Dendritic cell treated with granulocyte-macrophage colony-stimulating factor and Interleukin-4, amounts not matched to agents 40 ng/mL and 50 ng/mL, for 4 days (primary cell): ENCODE measurements at regions of chr15 and their contacts with region 1.

Region 1: DNA sequence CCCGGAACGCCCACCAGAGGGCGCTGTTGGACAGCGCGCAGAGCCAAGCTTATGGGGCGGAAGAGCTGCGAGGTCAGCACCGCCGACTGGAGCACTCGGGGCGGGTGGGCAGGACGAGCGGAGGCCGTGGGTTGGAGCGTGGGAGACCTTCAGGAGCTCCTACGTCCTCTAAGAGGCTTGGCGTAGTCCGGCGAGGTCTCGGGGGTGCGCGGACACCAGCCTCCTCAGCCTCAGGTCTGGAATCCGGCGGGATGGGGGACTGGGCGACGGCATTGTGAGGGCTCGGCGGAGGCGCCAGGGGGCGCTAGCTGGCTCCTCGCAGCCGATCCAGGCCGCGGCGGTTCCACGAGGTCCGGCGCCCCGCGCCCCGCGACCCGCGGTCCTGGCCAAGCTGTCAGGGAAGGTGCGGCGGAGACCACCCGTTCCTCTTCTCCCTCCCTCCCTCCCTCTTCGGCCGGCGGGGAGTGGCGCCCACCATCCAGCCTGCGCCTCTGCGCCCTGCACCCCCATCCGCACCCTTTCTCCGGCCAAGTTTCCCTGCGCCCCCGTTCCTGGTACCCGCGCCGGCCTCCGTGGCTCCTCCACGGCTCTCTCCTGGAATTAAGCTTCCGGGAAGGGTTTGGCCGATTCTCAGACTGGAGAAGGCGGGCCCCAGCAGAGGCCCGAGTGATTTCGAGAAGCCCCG is 24.3 kb upstream of the POLG start:
- H3K4me3 Mint-ChIP-seq: peak overlapping the region; percentile 83
- H3K27ac Mint-ChIP-seq: no peak overlapping the region
- H3K4me1 Mint-ChIP-seq: peaks cover 42% of the 10 kb centered on the region
- H3K27me3 Mint-ChIP-seq: peaks cover 89% of the 10 kb centered on the region

Region 2: DNA sequence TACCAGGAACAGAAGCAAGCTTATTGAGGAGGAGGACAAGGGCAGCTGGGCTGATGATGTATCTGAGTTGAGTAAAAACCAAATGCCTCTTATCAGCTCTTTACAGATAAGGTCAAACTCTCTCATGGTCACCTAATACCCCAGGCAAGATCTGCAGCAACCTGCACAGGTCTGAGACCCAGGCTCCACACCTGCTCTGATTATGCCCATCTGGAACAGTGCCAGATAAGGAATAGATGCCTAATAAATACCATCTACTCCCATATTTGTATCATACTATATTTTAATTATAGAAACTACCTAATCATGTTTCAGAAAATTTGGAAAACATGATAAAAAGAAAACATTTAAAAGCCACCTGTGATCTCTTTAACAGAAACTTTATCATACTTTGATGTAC is 758.4 kb before region 1 on chr15:
- intact Hi-C with region 1: no loop called
- H3K4me3 Mint-ChIP-seq: no peak overlapping the region
- H3K27ac Mint-ChIP-seq: no peak overlapping the region
- H3K4me1 Mint-ChIP-seq: peaks cover 7% of the 10 kb centered on the region
- H3K27me3 Mint-ChIP-seq: peaks cover 39% of the 10 kb centered on the region

Region 3: GRCh38 chr15:89206908-89207331 is 152.0 kb before region 1 on chr15:
- intact Hi-C with region 1: loop called (anchors 5 kb)
- H3K4me3 Mint-ChIP-seq: no peak overlapping the region
- H3K27ac Mint-ChIP-seq: no peak overlapping the region
- H3K4me1 Mint-ChIP-seq: peaks cover 13% of the 10 kb centered on the region
- H3K27me3 Mint-ChIP-seq: peaks cover 2% of the 10 kb centered on the region

Region 4: DNA sequence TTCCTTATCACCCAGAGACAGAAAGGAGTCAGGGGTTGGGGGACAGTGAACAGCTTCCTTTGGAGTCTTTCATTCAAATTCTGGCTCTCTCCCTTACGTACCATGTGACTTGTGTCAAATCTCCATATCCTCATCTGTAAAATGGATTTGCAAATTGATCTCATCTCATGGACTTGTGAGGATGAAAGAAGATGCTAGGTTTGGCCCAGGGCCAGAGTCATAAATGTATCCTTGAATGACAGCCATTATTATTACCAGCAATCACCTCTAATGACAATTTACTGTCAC is 43.6 kb after region 1 on chr15:
- intact Hi-C with region 1: no loop called
- H3K4me3 Mint-ChIP-seq: no peak overlapping the region
- H3K27ac Mint-ChIP-seq: no peak overlapping the region
- H3K4me1 Mint-ChIP-seq: peaks cover 39% of the 10 kb centered on the region
- H3K27me3 Mint-ChIP-seq: peaks cover 85% of the 10 kb centered on the region

Region 5: DNA sequence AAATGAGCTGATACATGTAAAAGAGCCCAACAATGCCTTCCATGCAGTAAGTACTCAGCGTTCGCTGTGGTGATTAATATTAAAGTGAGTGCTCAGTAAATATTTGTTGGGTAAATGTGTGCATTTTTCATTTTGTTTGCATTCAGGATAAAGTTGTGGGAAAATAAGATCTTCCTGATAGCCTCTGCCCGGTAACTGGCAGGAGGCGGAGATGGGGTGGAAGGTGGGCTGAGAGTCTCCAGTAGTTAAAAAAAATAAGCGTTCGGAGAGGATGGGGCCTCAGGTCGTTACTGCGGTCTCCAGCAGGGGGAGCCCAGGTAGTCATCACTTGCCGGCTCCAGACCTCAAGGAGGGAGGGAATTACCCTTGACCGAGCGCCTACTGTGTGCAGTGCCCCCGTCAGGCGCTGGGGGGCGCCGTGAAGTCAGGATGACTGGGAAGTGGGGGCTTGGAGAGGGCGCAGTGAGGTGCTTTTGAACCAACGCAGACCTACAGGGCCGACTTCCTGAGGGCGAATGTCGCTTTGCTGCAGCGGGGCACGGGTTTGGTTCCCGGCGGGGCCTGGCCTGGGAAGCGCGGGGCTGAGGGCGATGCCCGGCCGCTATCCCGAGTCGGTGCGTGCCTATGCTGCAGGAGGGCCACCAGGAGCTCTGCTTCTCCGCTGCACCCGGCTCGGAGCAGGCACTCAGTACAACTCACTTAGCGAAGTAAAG is 57.4 kb after region 1 on chr15:
- intact Hi-C with region 1: no loop called
- H3K4me3 Mint-ChIP-seq: no peak overlapping the region
- H3K27ac Mint-ChIP-seq: no peak overlapping the region
- H3K4me1 Mint-ChIP-seq: peaks cover 10% of the 10 kb centered on the region
- H3K27me3 Mint-ChIP-seq: peaks cover 98% of the 10 kb centered on the region

Region 6: GRCh38 chr15:89430530-89431341 is 71.8 kb after region 1 on chr15:
- intact Hi-C with region 1: loop called (anchors 1 kb)
- H3K4me3 Mint-ChIP-seq: peak overlapping the region; percentile 77
- H3K27ac Mint-ChIP-seq: no peak overlapping the region
- H3K4me1 Mint-ChIP-seq: peaks cover 7% of the 10 kb centered on the region
- H3K27me3 Mint-ChIP-seq: peaks cover 60% of the 10 kb centered on the region

Region 7: GRCh38 chr15:89472785-89473256 is 113.9 kb after region 1 on chr15:
- intact Hi-C with region 1: loop called (anchors 2 kb)
- H3K4me3 Mint-ChIP-seq: no peak overlapping the region
- H3K27ac Mint-ChIP-seq: no peak overlapping the region
- H3K4me1 Mint-ChIP-seq: no peaks in the 10 kb centered on the region
- H3K27me3 Mint-ChIP-seq: peaks cover 61% of the 10 kb centered on the region

Region 8: GRCh38 chr15:89521605-89522004 is 162.7 kb after region 1 on chr15:
- intact Hi-C with region 1: no loop called
- H3K4me3 Mint-ChIP-seq: no peak overlapping the region
- H3K27ac Mint-ChIP-seq: no peak overlapping the region
- H3K4me1 Mint-ChIP-seq: no peaks in the 10 kb centered on the region
- H3K27me3 Mint-ChIP-seq: peaks cover 10% of the 10 kb centered on the region

Region 9: DNA sequence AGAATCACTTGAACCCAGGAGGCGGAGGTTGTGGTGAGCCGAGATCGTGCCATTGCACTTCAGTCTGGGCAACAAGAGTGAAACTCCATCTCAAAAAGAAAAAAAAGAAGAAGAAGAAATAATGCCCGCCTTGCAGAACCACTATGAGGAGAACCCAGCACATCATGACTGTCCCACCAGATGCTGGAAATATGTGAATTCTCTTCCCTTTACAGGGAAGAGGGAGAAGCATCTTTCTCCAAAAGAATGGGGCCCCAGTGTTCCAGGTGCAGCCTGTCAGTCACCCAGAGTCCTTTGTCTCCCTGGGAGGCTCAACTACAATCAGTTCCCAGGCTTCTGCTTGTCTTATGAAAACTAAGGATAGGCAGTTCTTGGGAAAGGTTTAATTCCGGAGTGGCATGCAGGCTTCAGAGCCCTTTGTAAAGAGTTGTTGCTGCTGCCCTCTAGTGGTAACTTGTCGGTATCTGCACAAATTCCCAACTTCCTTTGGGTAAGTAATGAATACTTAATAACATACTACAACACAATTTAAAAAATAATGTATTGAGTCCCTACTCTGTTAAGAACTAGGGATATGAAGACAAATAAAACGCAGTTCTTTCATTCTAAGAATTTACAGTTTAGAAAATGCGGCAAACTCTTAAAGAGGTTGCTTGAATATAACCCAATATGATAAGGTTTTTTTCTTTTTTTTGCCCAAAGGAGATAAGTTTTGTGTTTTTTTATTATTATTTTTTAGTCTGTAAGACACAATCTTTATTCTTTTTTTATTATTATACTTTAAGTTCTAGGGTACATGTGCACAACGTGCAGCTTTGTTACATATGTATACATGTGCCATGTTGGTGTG is 197.7 kb after region 1 on chr15:
- intact Hi-C with region 1: loop called (anchors 10 kb)
- H3K4me3 Mint-ChIP-seq: no peak overlapping the region
- H3K27ac Mint-ChIP-seq: no peak overlapping the region
- H3K4me1 Mint-ChIP-seq: peaks cover 6% of the 10 kb centered on the region
- H3K27me3 Mint-ChIP-seq: peaks cover 24% of the 10 kb centered on the region